RWPE1 (cell line): ENCODE measurements at regions of chr10 and their contacts with region 1.

Region 1: GRCh38 chr10:101569838-101570766 is 18.0 kb downstream of the POLL start:
- DNase-seq: peak; percentile 88
- H3K27ac ChIP-seq: peak overlapping the region; percentile 8
- CTCF ChIP-seq: peak; percentile 81

Region 2: GRCh38 chr10:101297901-101298486 is 272.1 kb before region 1 on chr10:
- CTCF ChIA-PET with region 1: interaction called, 35 read pairs
- POLR2A ChIA-PET with region 1: no interaction called
- DNase-seq: peak; percentile 73
- H3K27ac ChIP-seq: no peak overlapping the region
- CTCF ChIP-seq: peak; percentile 84